Ovary (tissue), 10 donors: ENCODE measurements at regions of chr16 and their contacts with region 1.

Region 1: GRCh38 chr16:10509534-10510025 is 70.8 kb downstream of the EMP2 start:
- DNase-seq: peak in 4 of 5 donors; percentile 49 to 60 (median 54)
- H3K4me3 ChIP-seq: no peak overlapping the region
- H3K27ac ChIP-seq: no peak overlapping the region
- H3K4me1 ChIP-seq: no peaks in the 10 kb centered on the region
- H3K27me3 ChIP-seq: no peaks in the 10 kb centered on the region
- CTCF ChIP-seq: peak; percentile 64 to 76 (median 65)
- EP300 ChIP-seq: no peak
- POLR2A ChIP-seq: no peak

Region 2: DNA sequence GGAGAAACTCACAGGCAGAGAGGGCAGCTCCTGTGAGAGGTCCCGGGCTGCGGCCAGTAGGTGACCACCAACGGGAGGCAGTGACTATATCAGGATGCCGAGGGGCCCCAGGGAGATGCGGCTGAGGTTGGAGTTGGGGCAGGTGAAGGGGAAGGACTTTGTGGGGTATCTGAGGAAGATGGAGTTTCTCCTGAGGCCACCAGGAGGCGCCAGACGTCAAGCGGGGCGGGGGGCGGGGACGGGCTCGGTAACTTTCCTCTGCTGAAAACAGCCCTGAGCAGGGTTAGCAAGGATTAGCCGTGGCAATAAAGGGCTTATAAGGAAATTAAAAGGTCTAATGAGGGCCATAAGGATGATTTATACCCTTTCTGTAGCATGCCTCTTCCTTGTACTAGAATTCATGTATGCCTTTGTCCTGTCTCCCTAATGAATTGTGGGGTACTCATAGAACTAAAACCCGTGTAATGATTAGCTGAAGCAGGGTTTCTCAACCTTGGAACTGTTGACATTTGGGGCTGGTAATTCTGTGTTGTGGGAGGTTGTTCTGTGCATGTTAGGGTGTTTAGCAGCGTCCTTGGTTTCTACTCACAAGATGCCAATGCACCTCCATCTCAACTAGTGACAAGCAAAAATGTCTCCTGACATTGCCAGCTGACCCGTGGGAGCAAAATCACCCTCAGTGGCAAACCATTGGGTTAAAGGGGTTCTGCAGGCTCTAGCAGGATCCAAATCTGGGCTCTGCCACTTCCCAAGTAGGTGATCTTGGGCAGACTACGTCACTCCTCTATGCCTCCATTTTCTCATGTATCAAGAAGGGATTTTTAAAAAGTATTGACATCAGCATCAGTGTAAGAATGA is 252.6 kb before region 1 on chr16:
- intact Hi-C with region 1: loop called in 2 of 4 experiments (anchors 10 kb)
- DNase-seq: peak in 3 of 5 donors; percentile 9 to 33 (median 19)
- H3K4me3 ChIP-seq: no peak overlapping the region
- H3K27ac ChIP-seq: no peak overlapping the region
- H3K4me1 ChIP-seq: no peaks in the 10 kb centered on the region
- H3K27me3 ChIP-seq: no peaks in the 10 kb centered on the region
- CTCF ChIP-seq: peak in 1 of 3 donors; percentile 29
- EP300 ChIP-seq: no peak
- POLR2A ChIP-seq: no peak

Region 3: DNA sequence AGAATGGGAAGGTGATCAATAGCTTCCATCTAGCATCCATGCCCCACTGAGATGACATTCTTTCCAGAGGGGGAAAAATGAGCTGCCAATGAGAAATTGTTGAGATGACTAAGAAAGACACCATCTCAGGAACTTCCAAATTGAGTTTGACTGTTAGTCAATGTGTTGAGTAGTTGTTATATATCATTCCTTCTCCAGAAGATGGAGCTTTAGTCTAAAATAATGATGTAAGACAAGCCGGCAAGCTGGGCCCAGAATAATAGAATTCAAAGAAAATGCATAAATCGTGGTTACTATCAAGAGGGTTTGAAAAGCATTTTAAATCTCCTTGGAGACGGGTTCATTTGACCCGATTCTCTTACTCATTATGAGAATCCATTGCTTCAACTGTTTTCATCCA is 194.8 kb before region 1 on chr16:
- intact Hi-C with region 1: loop called in 3 of 4 experiments (anchors 10 kb)
- DNase-seq: no peak
- H3K4me3 ChIP-seq: no peak overlapping the region
- H3K27ac ChIP-seq: no peak overlapping the region
- H3K4me1 ChIP-seq: no peaks in the 10 kb centered on the region
- H3K27me3 ChIP-seq: no peaks in the 10 kb centered on the region
- CTCF ChIP-seq: no peak
- EP300 ChIP-seq: no peak
- POLR2A ChIP-seq: no peak

Region 4: DNA sequence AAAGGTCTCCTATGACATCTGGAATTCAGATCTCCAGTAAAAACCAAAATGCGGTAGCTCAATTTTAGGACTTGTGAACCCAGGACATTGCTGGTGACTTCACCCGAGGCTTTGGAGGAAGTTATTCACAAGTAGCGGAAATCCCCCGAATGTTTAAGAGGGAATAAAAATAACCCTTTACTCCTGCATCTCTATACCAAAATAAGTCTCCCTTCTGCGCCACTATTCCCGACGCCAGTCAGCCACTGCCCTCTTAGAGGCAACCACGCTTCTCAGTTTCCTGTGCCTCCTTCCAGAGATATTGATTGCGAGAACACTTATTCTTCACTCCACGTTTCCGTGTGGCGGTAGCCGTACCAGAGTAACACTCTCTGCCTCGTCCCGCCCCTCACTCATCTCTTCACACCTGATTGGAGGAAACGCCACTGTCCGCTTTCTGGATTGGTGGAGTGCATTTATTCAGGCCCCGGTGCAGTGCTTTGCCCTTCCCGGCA is 43.5 kb after region 1 on chr16:
- intact Hi-C with region 1: no loop called
- DNase-seq: no peak
- H3K4me3 ChIP-seq: no peak overlapping the region
- H3K27ac ChIP-seq: no peak overlapping the region
- H3K4me1 ChIP-seq: peaks cover 3% of the 10 kb centered on the region
- H3K27me3 ChIP-seq: no peaks in the 10 kb centered on the region
- CTCF ChIP-seq: no peak
- EP300 ChIP-seq: no peak
- POLR2A ChIP-seq: no peak

Region 5: DNA sequence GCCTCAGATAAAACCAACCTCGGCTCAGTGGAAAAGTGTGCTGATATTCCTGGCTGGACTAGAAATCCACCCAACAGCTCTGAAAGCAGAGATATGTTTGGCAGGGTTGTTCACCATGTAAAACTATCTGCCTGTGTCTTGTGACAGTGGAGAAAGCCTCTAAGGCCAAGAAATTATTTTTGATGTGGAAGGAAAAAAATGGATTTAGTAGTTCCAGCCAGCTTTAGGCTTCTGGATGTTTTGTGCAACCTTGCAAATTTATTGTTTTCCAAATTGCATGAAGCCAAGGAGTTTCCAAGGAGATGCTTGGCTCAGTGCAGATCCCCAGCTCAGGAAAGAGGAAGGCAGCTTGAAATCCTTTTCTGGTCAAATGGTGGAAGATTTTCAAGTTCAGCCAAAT is 153.6 kb after region 1 on chr16:
- intact Hi-C with region 1: no loop called
- DNase-seq: peak in 1 of 5 donors; percentile 12
- H3K4me3 ChIP-seq: no peak overlapping the region
- H3K27ac ChIP-seq: no peak overlapping the region
- H3K4me1 ChIP-seq: peaks cover 8% of the 10 kb centered on the region
- H3K27me3 ChIP-seq: no peaks in the 10 kb centered on the region
- CTCF ChIP-seq: no peak
- EP300 ChIP-seq: no peak
- POLR2A ChIP-seq: no peak

Region 6: DNA sequence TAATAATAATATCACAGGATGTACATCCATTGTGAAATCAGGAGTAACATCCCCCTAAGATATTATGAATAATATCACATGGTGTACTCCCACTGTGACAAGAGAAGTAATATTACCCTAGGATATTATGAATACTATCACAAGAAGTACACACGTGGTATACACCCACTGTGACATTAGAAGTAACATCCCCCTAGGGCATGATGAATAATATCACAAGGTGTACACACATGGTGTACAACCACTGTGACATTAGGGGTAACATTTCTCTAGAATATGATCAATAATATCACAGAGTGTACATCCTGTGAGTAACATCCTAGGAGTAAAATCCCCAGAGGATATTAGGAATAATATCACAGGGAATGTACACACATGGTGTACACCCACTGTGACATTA is 190.2 kb after region 1 on chr16:
- intact Hi-C with region 1: no loop called
- DNase-seq: no peak
- H3K4me3 ChIP-seq: no peak overlapping the region
- H3K27ac ChIP-seq: no peak overlapping the region
- H3K4me1 ChIP-seq: no peaks in the 10 kb centered on the region
- H3K27me3 ChIP-seq: no peaks in the 10 kb centered on the region
- CTCF ChIP-seq: no peak
- EP300 ChIP-seq: no peak
- POLR2A ChIP-seq: no peak